A673 (cell line): ENCODE measurements at regions of chr11 and their contacts with region 1.

Region 1: GRCh38 chr11:103682318-103683184 is 353.9 kb upstream of the DDI1 start:
- DNase-seq: peak; percentile 84
- H3K4me3 ChIP-seq: no peak overlapping the region
- H3K27ac ChIP-seq: no peak overlapping the region
- H3K4me1 ChIP-seq: peaks cover 12% of the 10 kb centered on the region
- H3K27me3 ChIP-seq: no peaks in the 10 kb centered on the region
- CTCF ChIP-seq: peak; percentile 91

Region 2: GRCh38 chr11:101786916-101787315 is 1895.6 kb before region 1 on chr11:
- CTCF ChIA-PET with region 1: no interaction called
- POLR2A ChIA-PET with region 1: no interaction called
- intact Hi-C with region 1: no loop called
- DNase-seq: no peak
- H3K4me3 ChIP-seq: no peak overlapping the region
- H3K27ac ChIP-seq: no peak overlapping the region
- H3K4me1 ChIP-seq: no peaks in the 10 kb centered on the region
- H3K27me3 ChIP-seq: no peaks in the 10 kb centered on the region
- CTCF ChIP-seq: no peak

Region 3: DNA sequence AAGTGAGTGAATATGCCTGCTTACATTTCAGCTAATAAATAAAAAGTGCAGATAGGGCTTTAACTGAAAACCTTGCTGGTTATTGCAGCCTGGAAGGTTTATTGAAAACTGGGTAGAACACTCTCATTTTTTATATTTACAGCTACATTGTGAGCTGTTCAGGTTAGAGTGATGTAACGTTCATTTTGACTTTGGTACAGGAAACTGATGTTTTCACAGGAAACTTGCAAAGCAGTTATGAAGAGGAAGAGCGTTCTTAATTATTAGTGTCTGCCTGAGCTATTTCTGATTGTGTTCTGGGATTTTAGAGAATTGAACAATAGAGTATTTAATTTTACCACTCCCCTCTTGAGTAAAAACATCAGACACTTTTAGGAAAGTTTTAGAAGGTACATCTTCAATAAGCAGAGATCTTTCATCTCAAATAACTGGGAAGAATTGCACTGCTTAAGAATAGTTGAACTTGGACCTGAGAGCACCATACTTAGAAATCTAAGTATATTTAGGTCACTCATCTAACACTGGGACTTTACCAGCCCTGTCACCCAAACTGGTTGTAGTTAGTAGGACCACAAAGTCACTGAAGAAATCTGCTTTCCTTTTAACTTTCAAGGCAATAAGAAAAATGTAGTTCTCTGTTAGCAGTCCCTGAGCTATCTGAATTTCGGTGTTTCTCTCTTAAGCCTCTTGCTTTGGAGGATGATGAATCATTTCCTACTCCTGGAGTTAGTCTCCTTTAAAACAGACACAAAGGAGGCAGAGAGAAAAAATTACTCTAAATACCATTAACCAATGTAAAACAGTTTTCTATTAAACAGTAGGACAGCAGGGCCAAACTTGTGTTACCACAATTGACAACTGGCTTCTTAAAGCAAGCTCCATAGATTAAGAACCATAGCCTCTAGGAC is 225.3 kb after region 1 on chr11:
- CTCF ChIA-PET with region 1: interaction called, 6 read pairs
- POLR2A ChIA-PET with region 1: no interaction called
- intact Hi-C with region 1: loop called (anchors 5 kb)
- DNase-seq: peak; percentile 92
- H3K4me3 ChIP-seq: no peak overlapping the region
- H3K27ac ChIP-seq: peak overlapping the region; percentile 57
- H3K4me1 ChIP-seq: peaks cover 19% of the 10 kb centered on the region
- H3K27me3 ChIP-seq: no peaks in the 10 kb centered on the region
- CTCF ChIP-seq: no peak

Region 4: GRCh38 chr11:104151404-104152204 is 469.1 kb after region 1 on chr11:
- CTCF ChIA-PET with region 1: no interaction called
- POLR2A ChIA-PET with region 1: no interaction called
- intact Hi-C with region 1: loop called (anchors 5 kb)
- DNase-seq: peak; percentile 58
- H3K4me3 ChIP-seq: no peak overlapping the region
- H3K27ac ChIP-seq: no peak overlapping the region
- H3K4me1 ChIP-seq: peaks cover 29% of the 10 kb centered on the region
- H3K27me3 ChIP-seq: no peaks in the 10 kb centered on the region
- CTCF ChIP-seq: peak; percentile 73

Region 5: DNA sequence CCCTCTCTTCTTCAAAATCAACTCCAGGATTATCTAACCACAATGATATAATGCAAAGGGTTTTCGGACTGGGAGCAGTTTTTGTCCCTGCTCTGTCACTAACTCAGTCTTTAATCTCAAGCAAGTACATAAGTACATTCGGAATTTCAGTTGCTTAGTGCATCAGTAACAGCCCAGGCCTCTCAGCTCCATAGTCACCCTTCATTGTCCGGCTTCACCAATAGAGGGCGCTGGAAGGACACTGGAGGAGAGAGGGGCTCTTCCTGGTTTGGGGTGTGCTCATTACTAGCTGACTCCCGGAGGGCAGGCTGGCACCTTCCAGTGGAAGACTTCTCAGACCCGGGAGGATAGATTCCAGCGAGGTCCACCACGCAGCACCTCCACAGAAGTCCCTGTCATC is 571.8 kb after region 1 on chr11:
- CTCF ChIA-PET with region 1: interaction called, 7 read pairs
- POLR2A ChIA-PET with region 1: no interaction called
- intact Hi-C with region 1: loop called (anchors 5 kb)
- DNase-seq: peak; percentile 81
- H3K4me3 ChIP-seq: no peak overlapping the region
- H3K27ac ChIP-seq: no peak overlapping the region
- H3K4me1 ChIP-seq: no peaks in the 10 kb centered on the region
- H3K27me3 ChIP-seq: no peaks in the 10 kb centered on the region
- CTCF ChIP-seq: peak; percentile 93